ENCODE measurements at regions of chr9 and their contacts with region 1.

Region 1: DNA sequence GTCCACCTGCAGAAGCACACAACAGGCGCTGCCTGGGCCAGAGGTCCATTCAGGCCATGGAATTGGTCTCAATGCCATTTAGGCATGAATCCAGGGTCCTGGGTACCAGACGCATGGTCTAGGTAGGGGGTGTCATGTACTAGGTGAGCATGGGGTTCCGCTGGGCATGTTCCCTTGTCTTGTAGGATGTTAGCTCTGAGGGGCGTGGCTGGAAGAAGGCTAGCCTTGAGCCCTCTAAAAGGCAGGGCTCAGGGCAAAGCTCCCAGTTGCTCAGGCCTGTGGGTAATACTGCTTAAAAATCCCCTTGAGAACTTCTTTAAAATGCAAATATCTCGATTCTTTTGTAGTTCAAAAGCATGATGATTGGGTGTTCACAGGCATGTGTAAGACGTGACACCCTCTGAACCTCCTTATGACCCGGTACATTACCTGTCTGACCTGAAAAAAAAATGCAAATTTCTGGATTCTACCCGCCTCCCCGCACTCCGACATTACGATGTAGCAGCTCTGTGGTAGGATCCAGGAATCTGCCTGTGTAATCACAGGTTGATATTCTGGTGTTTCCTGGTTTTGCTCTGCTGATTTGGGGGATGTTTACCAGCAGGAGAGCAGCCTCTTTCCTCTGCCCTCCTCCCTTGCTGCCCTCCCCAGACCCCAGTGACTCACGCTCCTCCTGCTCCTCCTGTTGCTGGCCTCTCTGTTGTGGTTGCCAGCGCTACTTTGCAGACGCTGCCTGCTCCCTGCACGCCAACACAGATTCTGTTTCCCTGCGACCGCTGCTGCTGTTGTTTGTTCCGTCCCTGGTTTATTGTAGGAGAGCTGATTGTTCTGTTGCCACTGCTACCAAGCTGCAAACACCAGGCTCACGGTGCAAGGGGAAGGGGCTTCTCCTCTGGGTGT is 5.7 kb downstream of the TMC1 start:
- DNase-seq: peak; percentile 94 to 97
- H3K4me3 ChIP-seq: peak overlapping the region; percentile 60
- H3K27ac ChIP-seq: peak overlapping the region; percentile 96
- H3K4me1 ChIP-seq: peaks cover 67% of the 10 kb centered on the region
- H3K27me3 ChIP-seq: no peaks in the 10 kb centered on the region
- CTCF ChIP-seq: no peak

Region 2: DNA sequence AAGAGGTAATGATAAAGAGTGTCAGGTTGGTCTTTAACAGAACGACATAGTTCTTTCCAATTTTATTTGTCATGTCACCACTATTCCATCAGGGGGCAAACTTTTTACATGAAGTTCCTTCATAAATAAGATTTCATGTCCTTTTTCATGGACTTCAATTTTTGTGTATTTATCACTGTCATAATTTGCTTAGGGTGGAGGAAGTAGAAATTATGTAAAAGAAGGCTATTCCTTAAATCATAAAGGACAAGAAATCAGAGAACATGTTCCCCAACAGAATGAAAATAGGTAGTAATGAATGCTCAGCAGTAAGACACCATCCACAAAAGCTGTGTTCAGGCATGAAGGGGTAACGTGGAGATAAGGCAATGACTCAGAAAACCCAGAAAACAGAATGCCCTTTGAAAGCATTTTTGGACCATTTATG is 234.9 kb before region 1 on chr9:
- CTCF ChIA-PET with region 1: no interaction called
- POLR2A ChIA-PET with region 1: interaction called, 3 read pairs
- intact Hi-C with region 1: loop called (anchors 1 kb)
- DNase-seq: no peak
- H3K4me3 ChIP-seq: no peak overlapping the region
- H3K27ac ChIP-seq: no peak overlapping the region
- H3K4me1 ChIP-seq: peaks cover 26% of the 10 kb centered on the region
- H3K27me3 ChIP-seq: no peaks in the 10 kb centered on the region
- CTCF ChIP-seq: peak; percentile 71

Region 3: DNA sequence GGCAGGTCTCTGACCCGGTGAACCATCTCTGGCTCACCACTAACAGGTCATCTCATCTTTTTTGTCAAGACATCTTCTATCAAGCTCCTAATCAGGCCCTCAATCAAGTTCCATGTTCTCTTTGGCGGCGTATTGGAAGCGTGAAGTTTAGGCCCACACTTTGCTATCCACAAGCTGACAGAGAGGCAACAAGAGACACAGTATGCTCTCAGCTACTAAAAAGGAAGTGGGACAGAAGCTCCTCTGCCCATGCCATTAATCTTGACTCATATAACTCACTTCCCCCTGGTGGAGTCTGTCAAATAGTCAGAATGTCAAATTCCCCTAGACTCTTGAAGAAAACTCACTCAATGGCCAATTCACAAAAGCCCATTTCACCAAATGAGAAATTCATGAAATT is 83.3 kb before region 1 on chr9:
- CTCF ChIA-PET with region 1: interaction called, 3 read pairs
- POLR2A ChIA-PET with region 1: interaction called, 10 read pairs
- intact Hi-C with region 1: loop called (anchors 1 kb)
- DNase-seq: no peak
- H3K4me3 ChIP-seq: no peak overlapping the region
- H3K27ac ChIP-seq: peak overlapping the region; percentile 82
- H3K4me1 ChIP-seq: peaks cover 42% of the 10 kb centered on the region
- H3K27me3 ChIP-seq: no peaks in the 10 kb centered on the region
- CTCF ChIP-seq: no peak

Region 4: GRCh38 chr9:72473474-72474261 is 53.5 kb before region 1 on chr9:
- CTCF ChIA-PET with region 1: no interaction called
- POLR2A ChIA-PET with region 1: interaction called, 23 read pairs
- intact Hi-C with region 1: loop called (anchors 1 kb)
- DNase-seq: no peak
- H3K4me3 ChIP-seq: no peak overlapping the region
- H3K27ac ChIP-seq: no peak overlapping the region
- H3K4me1 ChIP-seq: peaks cover 31% of the 10 kb centered on the region
- H3K27me3 ChIP-seq: no peaks in the 10 kb centered on the region
- CTCF ChIP-seq: no peak

Region 5: GRCh38 chr9:72540348-72540873 is 13.3 kb after region 1 on chr9:
- CTCF ChIA-PET with region 1: interaction called, 3 read pairs
- POLR2A ChIA-PET with region 1: interaction called, 17 read pairs
- intact Hi-C with region 1: loop called (anchors 1 kb)
- DNase-seq: peak; percentile 43 to 60
- H3K4me3 ChIP-seq: no peak overlapping the region
- H3K27ac ChIP-seq: peak overlapping the region; percentile 42
- H3K4me1 ChIP-seq: peaks cover 54% of the 10 kb centered on the region
- H3K27me3 ChIP-seq: no peaks in the 10 kb centered on the region
- CTCF ChIP-seq: no peak

Region 6: DNA sequence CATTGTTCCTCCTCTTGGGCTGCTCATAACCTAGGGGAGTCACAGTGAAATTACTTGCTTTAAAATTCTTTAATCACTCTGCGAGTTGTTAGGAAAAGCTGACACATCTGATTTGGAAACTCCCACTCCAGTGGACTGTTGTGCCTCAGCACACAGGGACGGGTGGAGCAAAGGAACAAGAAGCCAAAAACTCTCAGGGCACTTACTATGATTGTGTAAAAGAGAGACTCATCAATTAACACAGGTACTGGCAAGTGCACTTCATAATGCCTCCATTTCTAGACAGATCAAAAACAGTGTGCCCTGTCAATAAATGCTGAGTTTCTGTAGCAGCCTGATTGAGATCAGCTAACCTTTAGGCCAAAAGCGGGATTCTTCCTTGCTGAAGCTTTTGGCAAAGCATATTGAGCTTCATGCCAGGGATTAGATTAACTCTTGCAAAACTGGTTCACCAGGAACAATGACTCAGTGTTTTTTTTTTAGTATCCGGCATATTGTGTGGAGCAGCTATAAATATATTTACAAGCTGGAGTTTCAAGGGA is 50.1 kb after region 1 on chr9:
- CTCF ChIA-PET with region 1: interaction called, 5 read pairs
- POLR2A ChIA-PET with region 1: interaction called, 7 read pairs
- intact Hi-C with region 1: loop called (anchors 1 kb)
- DNase-seq: peak; percentile 59 to 95
- H3K4me3 ChIP-seq: peak overlapping the region; percentile 43; the same call in 1 of the 2 replicates
- H3K27ac ChIP-seq: peak overlapping the region; percentile 95
- H3K4me1 ChIP-seq: peaks cover 89% of the 10 kb centered on the region
- H3K27me3 ChIP-seq: no peaks in the 10 kb centered on the region
- CTCF ChIP-seq: no peak

Region 7: GRCh38 chr9:72827950-72828731 is 301.0 kb after region 1 on chr9:
- CTCF ChIA-PET with region 1: no interaction called
- POLR2A ChIA-PET with region 1: no interaction called
- intact Hi-C with region 1: loop called (anchors 2 kb)
- DNase-seq: peak; percentile 16 to 97
- H3K4me3 ChIP-seq: no peak overlapping the region
- H3K27ac ChIP-seq: peak overlapping the region; percentile 92
- H3K4me1 ChIP-seq: peaks cover 31% of the 10 kb centered on the region
- H3K27me3 ChIP-seq: no peaks in the 10 kb centered on the region
- CTCF ChIP-seq: no peak